CD4-positive, alpha-beta memory T cell (primary cell): ENCODE measurements at regions of chr17 and their contacts with region 1.

Region 1: GRCh38 chr17:8118769-8119580 is 661 bp upstream of the ALOXE3 start:
- DNase-seq: peak; percentile 87 to 91 (median 88)
- H3K4me3 ChIP-seq: peak overlapping the region; percentile 69 to 97
- H3K4me3 Mint-ChIP-seq: peak overlapping the region; percentile 91 to 97 (median 94)
- H3K27ac ChIP-seq: peak overlapping the region; percentile 56
- H3K27ac Mint-ChIP-seq: peak overlapping the region; percentile 95 to 100 (median 98)
- H3K4me1 ChIP-seq: peaks cover 52% of the 10 kb centered on the region
- H3K4me1 Mint-ChIP-seq: peaks cover 34 to 63% (median 48%) of the 10 kb centered on the region in 4 donors
- H3K27me3 ChIP-seq: peaks cover 42% of the 10 kb centered on the region
- H3K27me3 Mint-ChIP-seq: peaks cover 27 to 59% of the 10 kb centered on the region in 2 donors

Region 2: GRCh38 chr17:7956228-7956965 is 162.6 kb before region 1 on chr17:
- CTCF ChIA-PET with region 1: no interaction called
- POLR2A ChIA-PET with region 1: no interaction called
- intact Hi-C with region 1: no loop called
- DNase-seq: no peak
- H3K4me3 ChIP-seq: no peak overlapping the region
- H3K4me3 Mint-ChIP-seq: no peak overlapping the region
- H3K27ac ChIP-seq: no peak overlapping the region
- H3K27ac Mint-ChIP-seq: peak overlapping the region in 1 of 7 donors; percentile 83
- H3K4me1 ChIP-seq: peaks cover 6% of the 10 kb centered on the region
- H3K4me1 Mint-ChIP-seq: peaks cover 1 to 4% (median 2%) of the 10 kb centered on the region in 4 donors
- H3K27me3 ChIP-seq: no peaks in the 10 kb centered on the region
- H3K27me3 Mint-ChIP-seq: no peaks in the 10 kb centered on the region

Region 3: DNA sequence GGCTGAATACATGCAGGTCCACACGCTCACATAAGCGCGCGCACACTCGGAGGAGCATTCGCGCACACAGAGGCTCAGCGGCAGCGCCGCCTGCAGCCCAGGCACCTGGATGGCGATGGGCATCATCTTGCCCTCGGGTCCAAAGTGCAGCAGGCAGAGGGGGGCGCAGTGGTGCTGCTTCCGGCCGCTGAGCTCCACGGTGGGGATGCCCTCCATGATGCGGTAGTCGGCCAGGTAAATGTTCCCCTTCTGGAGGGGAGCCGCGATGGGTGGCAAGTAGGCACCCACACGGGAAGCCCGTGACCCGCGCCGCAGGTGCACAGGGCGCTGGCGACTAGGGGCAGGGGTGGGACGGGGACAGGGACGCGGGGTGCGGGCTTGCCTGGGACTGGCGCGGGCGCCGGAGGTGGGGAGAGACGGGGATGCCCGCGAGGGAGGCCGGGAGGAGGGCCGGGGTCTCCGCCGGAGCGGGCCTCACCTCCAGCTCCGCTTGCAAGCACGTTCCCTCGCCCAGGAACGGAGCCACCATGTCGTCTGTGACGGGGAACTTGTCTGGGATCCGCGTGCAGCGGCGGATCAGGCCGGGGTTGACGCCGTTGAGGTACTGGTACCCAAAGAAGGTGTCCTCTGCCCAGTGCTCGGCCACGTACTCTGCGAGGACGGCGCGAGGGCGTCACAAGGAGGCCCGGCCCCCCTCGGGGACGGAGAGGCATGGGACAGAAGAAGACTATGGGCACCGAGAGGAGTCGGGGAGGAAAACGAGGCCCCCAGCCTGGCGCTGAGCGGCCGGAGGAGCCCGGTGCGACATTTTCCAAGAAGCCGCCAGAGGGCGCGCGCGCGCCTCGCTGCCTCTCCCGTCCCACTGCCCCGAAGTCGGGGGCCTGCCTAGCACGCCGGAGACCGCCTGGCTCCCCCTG is 39.4 kb before region 1 on chr17:
- CTCF ChIA-PET with region 1: interaction called, 29 read pairs
- POLR2A ChIA-PET with region 1: interaction called, 11 read pairs
- intact Hi-C with region 1: loop called (anchors 1 kb)
- DNase-seq: peak; percentile 76 to 84 (median 77)
- H3K4me3 ChIP-seq: peak overlapping the region in 1 of 2 donors; percentile 70
- H3K4me3 Mint-ChIP-seq: peak overlapping the region; percentile 86 to 93 (median 89)
- H3K27ac ChIP-seq: peak overlapping the region; percentile 63
- H3K27ac Mint-ChIP-seq: peak overlapping the region; percentile 46 to 95 (median 86)
- H3K4me1 ChIP-seq: peaks cover 14% of the 10 kb centered on the region
- H3K4me1 Mint-ChIP-seq: peaks cover 7 to 16% (median 12%) of the 10 kb centered on the region in 4 donors
- H3K27me3 ChIP-seq: peaks cover 3% of the 10 kb centered on the region
- H3K27me3 Mint-ChIP-seq: peaks cover 0 to 6% of the 10 kb centered on the region in 2 donors

Region 4: DNA sequence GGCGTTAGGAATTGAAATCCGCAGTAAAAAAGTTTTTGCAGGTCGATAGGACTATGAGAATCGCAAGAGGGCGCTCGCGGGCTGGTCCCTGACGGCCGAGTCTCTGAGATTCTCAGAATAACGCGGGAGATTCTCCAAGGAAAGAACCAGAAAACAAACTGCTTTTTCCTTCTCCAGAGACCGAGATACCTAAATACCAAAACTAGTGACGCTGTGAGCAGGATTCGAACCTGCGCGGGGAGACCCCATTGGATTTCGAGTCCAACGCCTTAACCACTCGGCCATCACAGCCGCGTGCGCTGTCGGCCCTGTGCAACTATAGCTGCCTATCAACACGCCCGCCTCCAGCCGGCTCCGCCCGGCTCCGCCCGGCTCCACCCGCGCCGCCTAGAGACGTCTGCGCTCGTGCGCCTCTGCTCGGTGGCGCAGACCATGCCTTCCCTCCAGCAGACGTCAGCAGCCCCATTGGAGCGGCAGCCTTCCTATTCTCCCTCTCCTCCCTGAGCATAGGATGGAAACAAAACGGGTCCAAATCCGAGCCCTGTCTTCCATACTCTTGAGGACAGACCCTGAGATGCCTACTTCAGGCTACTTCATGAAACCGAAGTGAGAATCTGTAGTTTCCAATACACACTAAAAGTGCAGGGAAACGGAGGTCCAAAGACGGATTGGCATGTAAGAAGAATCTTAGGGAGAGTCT is 19.8 kb after region 1 on chr17:
- CTCF ChIA-PET with region 1: interaction called, 63 read pairs
- POLR2A ChIA-PET with region 1: interaction called, 54 read pairs
- intact Hi-C with region 1: loop called (anchors 1 kb)
- DNase-seq: peak; percentile 95 to 98 (median 96)
- H3K4me3 ChIP-seq: peak overlapping the region; percentile 60 to 74
- H3K4me3 Mint-ChIP-seq: no peak overlapping the region
- H3K27ac ChIP-seq: peak overlapping the region; percentile 78
- H3K27ac Mint-ChIP-seq: no peak overlapping the region
- H3K4me1 ChIP-seq: peaks cover 20% of the 10 kb centered on the region
- H3K4me1 Mint-ChIP-seq: peaks cover 0 to 8% (median 3%) of the 10 kb centered on the region in 4 donors
- H3K27me3 ChIP-seq: no peaks in the 10 kb centered on the region
- H3K27me3 Mint-ChIP-seq: no peaks in the 10 kb centered on the region

Region 5: GRCh38 chr17:8162233-8162996 is 43.4 kb after region 1 on chr17 and contains the start of gene VAMP2:
- CTCF ChIA-PET with region 1: interaction called, 38 read pairs
- POLR2A ChIA-PET with region 1: interaction called, 83 read pairs
- intact Hi-C with region 1: no loop called
- DNase-seq: peak; percentile 84 to 90 (median 89)
- H3K4me3 ChIP-seq: peak within 1 kb of the TSS; percentile 80 to 98
- H3K4me3 Mint-ChIP-seq: peak within 1 kb of the TSS; percentile 91 to 93 (median 91)
- H3K27ac ChIP-seq: peak within 1 kb of the TSS; percentile 100
- H3K27ac Mint-ChIP-seq: peak within 1 kb of the TSS; percentile 95 to 99 (median 98)
- H3K4me1 ChIP-seq: peaks cover 68% of the 10 kb centered on the region
- H3K4me1 Mint-ChIP-seq: peaks cover 47 to 66% (median 53%) of the 10 kb centered on the region in 4 donors
- H3K27me3 ChIP-seq: no peaks in the 10 kb centered on the region
- H3K27me3 Mint-ChIP-seq: no peaks in the 10 kb centered on the region
- total RNA-seq, gene VAMP2: 190 to 203 TPM

Region 6: GRCh38 chr17:8294814-8295316 is 175.9 kb after region 1 on chr17:
- CTCF ChIA-PET with region 1: interaction called, 23 read pairs
- POLR2A ChIA-PET with region 1: interaction called, 20 read pairs
- intact Hi-C with region 1: loop called (anchors 1 kb)
- DNase-seq: no peak
- H3K4me3 ChIP-seq: peak overlapping the region; percentile 78 to 92
- H3K4me3 Mint-ChIP-seq: peak overlapping the region; percentile 91 to 97 (median 94)
- H3K27ac ChIP-seq: peak overlapping the region; percentile 73
- H3K27ac Mint-ChIP-seq: peak overlapping the region; percentile 92 to 98 (median 96)
- H3K4me1 ChIP-seq: peaks cover 26% of the 10 kb centered on the region
- H3K4me1 Mint-ChIP-seq: peaks cover 18 to 50% (median 29%) of the 10 kb centered on the region in 4 donors
- H3K27me3 ChIP-seq: no peaks in the 10 kb centered on the region
- H3K27me3 Mint-ChIP-seq: no peaks in the 10 kb centered on the region